PC-3 (cell line): ENCODE measurements at regions of chr3 and their contacts with region 1.

Region 1: GRCh38 chr3:22565393-22565792 is 637.7 kb upstream of the UBE2E2 start:
- DNase-seq: no peak
- ATAC-seq: no peak
- H3K4me3 ChIP-seq: no peak overlapping the region
- H3K27ac ChIP-seq: no peak overlapping the region
- H3K4me1 ChIP-seq: peaks cover 21% of the 10 kb centered on the region
- H3K27me3 ChIP-seq: no peaks in the 10 kb centered on the region
- CTCF ChIP-seq: no peak

Region 2: DNA sequence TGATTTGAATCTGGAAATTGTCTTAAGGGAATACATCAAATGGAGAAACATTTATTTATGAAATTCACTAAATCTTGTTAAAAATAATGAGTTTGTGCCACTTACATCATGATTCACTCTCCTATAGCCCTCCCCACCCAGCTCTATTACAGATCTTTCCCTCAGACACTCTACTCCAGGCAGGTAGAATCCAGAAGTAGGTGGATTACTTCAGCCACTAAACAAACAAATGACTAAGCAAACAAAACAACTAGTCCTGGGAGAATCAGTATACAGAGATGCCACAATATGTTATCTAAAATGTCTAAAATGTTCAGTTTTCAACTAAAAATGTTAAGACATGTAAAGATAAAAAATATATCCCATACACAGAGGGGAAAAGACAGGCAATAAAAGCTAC is 29.6 kb after region 1 on chr3:
- CTCF ChIA-PET with region 1: no interaction called
- POLR2A ChIA-PET with region 1: no interaction called
- intact Hi-C with region 1: loop called (anchors 2 kb)
- DNase-seq: peak; percentile 71
- ATAC-seq: peak; percentile 95
- H3K4me3 ChIP-seq: no peak overlapping the region
- H3K27ac ChIP-seq: no peak overlapping the region
- H3K4me1 ChIP-seq: peaks cover 16% of the 10 kb centered on the region; the same call in 1 of the 2 replicates
- H3K27me3 ChIP-seq: no peaks in the 10 kb centered on the region
- CTCF ChIP-seq: no peak

Region 3: DNA sequence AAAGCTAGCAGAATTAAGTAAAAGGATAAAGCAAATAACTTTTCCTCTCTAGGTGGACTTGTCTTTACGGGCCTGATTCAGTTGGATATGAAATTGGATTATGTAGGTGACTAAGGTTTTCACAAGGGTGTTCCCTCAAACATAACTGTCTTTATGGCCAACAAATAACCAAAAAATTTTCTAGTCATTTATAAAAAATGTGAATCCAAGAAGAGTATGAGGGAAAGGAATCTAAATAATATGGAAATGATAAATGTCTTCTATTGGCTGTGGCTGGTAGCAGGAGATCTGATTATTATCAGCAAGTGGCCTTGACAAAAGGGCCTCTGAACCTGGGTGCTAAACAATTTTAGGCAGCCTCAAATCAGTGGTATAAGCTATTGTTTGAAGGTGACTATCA is 43.7 kb after region 1 on chr3:
- CTCF ChIA-PET with region 1: interaction called, 25 read pairs
- POLR2A ChIA-PET with region 1: no interaction called
- intact Hi-C with region 1: no loop called
- DNase-seq: peak; percentile 65
- ATAC-seq: peak; percentile 86
- H3K4me3 ChIP-seq: no peak overlapping the region
- H3K27ac ChIP-seq: peak overlapping the region; percentile 35
- H3K4me1 ChIP-seq: peaks cover 27% of the 10 kb centered on the region
- H3K27me3 ChIP-seq: no peaks in the 10 kb centered on the region
- CTCF ChIP-seq: no peak

Region 4: DNA sequence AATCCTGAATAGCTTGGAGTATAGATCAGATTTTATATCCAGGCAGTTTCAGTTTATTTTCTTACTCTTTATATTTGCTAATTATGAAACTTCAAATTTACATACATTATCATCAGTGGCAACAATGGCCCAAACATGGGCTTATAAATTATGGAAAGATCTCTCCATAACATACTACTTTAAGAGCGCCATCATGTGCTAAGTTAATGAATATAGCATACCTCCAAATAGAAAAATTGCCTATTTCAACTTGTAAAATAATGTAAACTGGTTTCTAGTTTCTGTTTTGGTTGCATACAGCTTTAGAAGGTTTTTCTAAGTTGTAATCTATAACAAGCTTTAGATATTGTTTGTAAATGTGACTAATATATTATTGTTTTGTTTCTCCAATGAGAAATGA is 106.5 kb after region 1 on chr3:
- CTCF ChIA-PET with region 1: no interaction called
- POLR2A ChIA-PET with region 1: no interaction called
- intact Hi-C with region 1: loop called (anchors 1 kb)
- DNase-seq: peak; percentile 33
- ATAC-seq: peak; percentile 35; the same call in 1 of the 2 replicates
- H3K4me3 ChIP-seq: no peak overlapping the region
- H3K27ac ChIP-seq: no peak overlapping the region
- H3K4me1 ChIP-seq: no peaks in the 10 kb centered on the region
- H3K27me3 ChIP-seq: no peaks in the 10 kb centered on the region
- CTCF ChIP-seq: peak; percentile 65

Region 5: GRCh38 chr3:22685597-22685996 is 120.2 kb after region 1 on chr3:
- CTCF ChIA-PET with region 1: interaction called, 5 read pairs
- POLR2A ChIA-PET with region 1: no interaction called
- intact Hi-C with region 1: loop called (anchors 1 kb)
- DNase-seq: peak; percentile 60
- ATAC-seq: peak; percentile 94
- H3K4me3 ChIP-seq: no peak overlapping the region
- H3K27ac ChIP-seq: no peak overlapping the region
- H3K4me1 ChIP-seq: no peaks in the 10 kb centered on the region
- H3K27me3 ChIP-seq: no peaks in the 10 kb centered on the region
- CTCF ChIP-seq: peak; percentile 87

Region 6: GRCh38 chr3:22887664-22888291 is 322.4 kb after region 1 on chr3:
- CTCF ChIA-PET with region 1: interaction called, 3 read pairs
- POLR2A ChIA-PET with region 1: no interaction called
- intact Hi-C with region 1: loop called (anchors 1 kb)
- DNase-seq: peak; percentile 59
- ATAC-seq: peak; percentile 70
- H3K4me3 ChIP-seq: no peak overlapping the region
- H3K27ac ChIP-seq: no peak overlapping the region
- H3K4me1 ChIP-seq: peaks cover 10% of the 10 kb centered on the region
- H3K27me3 ChIP-seq: peaks cover 22% of the 10 kb centered on the region
- CTCF ChIP-seq: peak; percentile 90

Region 7: DNA sequence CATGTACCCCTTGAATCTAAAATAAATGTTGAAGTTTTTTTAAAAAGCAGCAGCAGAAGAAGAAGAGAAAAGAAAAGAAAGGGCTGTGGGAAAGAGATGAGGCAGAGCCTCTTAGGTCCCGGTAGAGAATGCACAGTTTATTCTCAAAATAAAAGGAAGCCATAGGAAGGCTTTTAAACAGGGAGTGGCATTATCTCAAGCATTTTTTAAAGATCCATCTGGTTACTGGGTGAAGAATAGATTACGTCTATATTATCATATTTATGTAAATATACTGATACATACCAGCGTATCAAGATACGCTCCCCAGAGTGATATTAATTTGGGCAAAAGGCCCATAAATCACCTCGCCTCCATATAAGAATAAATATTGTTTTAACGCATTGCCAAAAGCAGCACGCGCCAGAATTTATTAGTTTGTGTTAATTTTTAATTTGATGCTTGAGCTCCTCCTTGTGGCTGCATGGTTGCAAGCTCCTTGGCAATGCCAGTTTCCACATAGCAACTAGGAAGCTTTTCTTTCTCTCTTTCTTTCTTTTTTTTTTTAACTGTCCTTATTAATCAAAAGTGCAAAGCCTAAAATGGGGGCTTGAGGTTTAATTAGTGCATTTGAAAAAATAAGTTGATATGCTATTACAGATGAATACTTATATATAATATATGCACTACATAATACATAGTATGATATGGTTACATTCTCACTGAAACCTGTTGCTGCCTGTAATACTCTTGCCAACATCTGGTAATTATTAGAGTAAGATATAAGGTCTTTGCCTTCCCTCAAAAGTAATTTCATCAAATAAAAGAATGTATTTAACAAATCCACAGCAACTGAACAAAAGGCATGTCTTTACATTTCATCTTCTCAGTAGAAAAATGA is 395.0 kb after region 1 on chr3:
- CTCF ChIA-PET with region 1: no interaction called
- POLR2A ChIA-PET with region 1: no interaction called
- intact Hi-C with region 1: loop called (anchors 1 kb)
- DNase-seq: peak; percentile 74
- ATAC-seq: peak; percentile 66
- H3K4me3 ChIP-seq: no peak overlapping the region
- H3K27ac ChIP-seq: no peak overlapping the region
- H3K4me1 ChIP-seq: no peaks in the 10 kb centered on the region
- H3K27me3 ChIP-seq: no peaks in the 10 kb centered on the region
- CTCF ChIP-seq: peak; percentile 92